A549 (cell line): ENCODE measurements at regions of chr19 and their contacts with region 1.

Region 1: GRCh38 chr19:17282488-17283255 is 971 bp downstream of the ANKLE1 start:
- DNase-seq: peak; percentile 64 to 83
- ATAC-seq: peak; percentile 92 to 98
- H3K4me3 ChIP-seq: 0 out of 3 replicates have a peak overlapping the region, but pooled peaks have one; percentile 19
- H3K27ac ChIP-seq: peak overlapping the region; percentile 58 to 76; a peak in 3 of 6 replicates
- H3K4me1 ChIP-seq: no peaks in the 10 kb centered on the region
- CTCF ChIP-seq: peak; percentile 73
- EP300 ChIP-seq: no peak
- POLR2A ChIP-seq: no peak
- RAD21 ChIP-seq: peak; percentile 84

Region 2: GRCh38 chr19:17069218-17069617 is 213.5 kb before region 1 on chr19:
- CTCF ChIA-PET with region 1: interaction called, 37 read pairs
- POLR2A ChIA-PET with region 1: no interaction called
- DNase-seq: no peak
- ATAC-seq: no peak
- H3K4me3 ChIP-seq: no peak overlapping the region
- H3K27ac ChIP-seq: no peak overlapping the region
- H3K4me1 ChIP-seq: peaks cover 7% of the 10 kb centered on the region; the same call in 2 of the 3 replicates
- CTCF ChIP-seq: no peak
- EP300 ChIP-seq: no peak
- POLR2A ChIP-seq: no peak
- RAD21 ChIP-seq: no peak

Region 3: DNA sequence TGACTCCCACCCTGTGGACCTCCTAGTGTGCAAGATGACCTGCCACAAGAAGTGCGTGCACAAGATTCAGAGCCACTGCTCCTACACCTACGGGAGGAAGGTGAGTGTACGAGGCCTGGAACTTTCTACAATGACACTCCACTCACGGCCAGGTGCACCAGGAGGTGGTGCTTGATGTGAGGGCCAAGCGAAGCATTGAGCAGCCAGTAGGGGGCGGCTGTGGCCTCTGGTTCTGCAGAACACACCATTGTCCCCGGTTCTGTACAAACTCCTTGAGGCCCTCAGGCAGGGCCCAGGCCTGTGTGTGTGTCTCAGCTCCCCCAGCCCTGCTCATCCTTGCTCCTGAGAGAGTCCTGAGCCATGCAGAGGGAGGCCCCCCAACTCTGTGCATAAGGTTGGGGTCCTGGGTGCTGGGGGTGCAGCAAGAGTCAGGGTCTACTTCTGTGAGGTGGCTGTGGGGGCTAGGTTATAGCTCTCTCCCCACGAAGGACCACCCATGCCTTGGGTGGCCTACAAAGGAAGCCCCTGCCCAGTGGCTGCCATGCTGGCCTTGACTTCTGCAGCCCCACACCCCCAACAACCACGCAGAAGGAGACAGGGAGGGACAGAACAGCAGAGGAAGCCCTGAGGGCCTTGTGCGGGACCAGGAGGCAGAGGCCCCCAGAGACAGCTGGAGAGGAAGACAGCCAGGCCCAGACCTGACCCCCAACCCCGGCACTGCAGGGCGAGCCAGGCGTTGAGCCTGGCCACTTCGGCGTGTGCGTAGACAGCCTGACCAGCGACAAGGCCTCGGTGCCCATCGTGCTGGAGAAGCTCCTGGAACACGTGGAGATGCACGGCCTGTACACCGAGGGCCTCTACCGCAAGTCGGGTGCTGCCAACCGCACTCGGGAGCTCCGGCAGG is 77.2 kb before region 1 on chr19:
- CTCF ChIA-PET with region 1: interaction called, 11 read pairs
- POLR2A ChIA-PET with region 1: no interaction called
- DNase-seq: peak; percentile 57 to 72
- ATAC-seq: peak; percentile 58 to 75
- H3K4me3 ChIP-seq: no peak overlapping the region
- H3K27ac ChIP-seq: no peak overlapping the region
- H3K4me1 ChIP-seq: no peaks in the 10 kb centered on the region
- CTCF ChIP-seq: peak; percentile 46
- EP300 ChIP-seq: no peak
- POLR2A ChIP-seq: no peak
- RAD21 ChIP-seq: peak; percentile 38 to 67; a peak in 4 of 5 replicates

Region 4: DNA sequence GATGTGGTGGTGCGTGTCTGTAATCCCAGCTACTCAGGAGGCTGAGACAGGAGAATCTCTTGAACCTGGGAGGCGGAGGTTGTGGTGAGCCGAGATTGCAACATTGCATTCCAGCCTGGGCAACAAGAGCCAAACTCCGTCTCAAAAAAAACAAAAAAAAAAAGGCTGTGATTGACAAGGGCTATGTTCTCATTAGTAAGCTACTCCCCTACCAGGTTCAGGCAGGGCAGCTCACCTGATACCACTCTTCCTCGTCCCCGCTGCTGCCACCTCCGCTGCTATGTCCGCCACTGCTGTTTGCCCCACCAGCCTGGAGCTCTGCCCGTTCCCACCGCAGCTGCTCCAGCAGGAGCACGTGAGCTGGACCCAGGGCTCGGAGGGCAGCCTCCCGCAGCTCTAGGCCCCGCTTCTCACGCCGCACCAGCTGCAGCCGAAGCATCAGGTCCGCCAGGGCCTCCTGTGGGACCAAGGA is 27.5 kb before region 1 on chr19:
- CTCF ChIA-PET with region 1: interaction called, 77 read pairs
- POLR2A ChIA-PET with region 1: no interaction called
- DNase-seq: no peak
- ATAC-seq: no peak
- H3K4me3 ChIP-seq: no peak overlapping the region
- H3K27ac ChIP-seq: no peak overlapping the region
- H3K4me1 ChIP-seq: no peaks in the 10 kb centered on the region; the same call in 2 of the 3 replicates
- CTCF ChIP-seq: no peak
- EP300 ChIP-seq: no peak
- POLR2A ChIP-seq: no peak
- RAD21 ChIP-seq: no peak